ENCODE measurements at regions of chr12 and their contacts with region 1.

Region 1: GRCh38 chr12:109110988-109111495 is 5.3 kb upstream of the ACACB start:
- DNase-seq: peak; percentile 95
- ATAC-seq: peak; percentile 93

Region 2: DNA sequence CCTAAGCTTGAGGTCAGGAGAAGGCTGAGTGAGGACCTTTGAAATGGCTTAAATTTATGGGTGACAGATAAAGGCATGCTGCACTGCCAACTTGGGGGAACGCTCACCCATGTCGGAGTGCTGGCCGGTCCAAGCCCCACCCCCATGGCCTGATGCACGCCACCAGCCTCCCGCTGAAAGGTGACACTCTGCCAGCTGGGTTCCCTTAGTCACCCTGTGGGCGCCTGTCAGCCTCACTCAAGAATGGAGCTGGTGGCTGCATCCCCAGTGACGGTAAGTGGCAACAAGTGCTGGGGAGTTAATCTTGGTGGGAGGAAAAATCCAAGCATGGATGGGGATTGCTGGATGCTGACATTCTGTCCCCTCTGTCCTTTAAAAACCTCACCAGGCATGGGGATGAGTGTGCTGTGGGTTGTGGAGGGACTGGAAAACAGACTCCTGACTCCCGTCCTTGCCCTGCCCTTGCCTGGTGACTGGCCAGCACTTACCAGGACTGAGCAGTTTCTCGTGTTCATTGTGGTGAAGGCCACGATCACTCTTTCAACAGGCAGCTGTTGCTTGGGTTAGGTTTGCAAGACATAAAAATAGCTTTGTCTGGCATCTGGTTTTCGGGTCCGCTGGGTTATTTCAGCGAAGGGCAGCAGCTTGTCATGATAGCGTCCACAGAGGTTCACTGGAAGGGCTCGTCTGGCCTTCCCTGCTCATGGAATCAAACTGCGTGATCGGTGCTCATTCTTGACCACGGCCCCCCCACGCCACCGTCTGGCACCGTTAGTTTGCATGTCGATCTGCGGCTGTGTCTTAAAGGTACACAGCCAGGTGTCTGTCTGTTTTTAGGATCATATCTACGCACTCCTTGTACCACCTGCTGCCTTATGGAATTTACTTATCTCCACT is 20.4 kb after region 1 on chr12:
- intact Hi-C with region 1: loop called (anchors 2 kb)
- DNase-seq: peak; percentile 85
- ATAC-seq: peak; percentile 84

Region 3: GRCh38 chr12:109154451-109155438 is 43.7 kb after region 1 on chr12:
- intact Hi-C with region 1: loop called (anchors 2 kb)
- DNase-seq: peak; percentile 93
- ATAC-seq: peak; percentile 95

Region 4: DNA sequence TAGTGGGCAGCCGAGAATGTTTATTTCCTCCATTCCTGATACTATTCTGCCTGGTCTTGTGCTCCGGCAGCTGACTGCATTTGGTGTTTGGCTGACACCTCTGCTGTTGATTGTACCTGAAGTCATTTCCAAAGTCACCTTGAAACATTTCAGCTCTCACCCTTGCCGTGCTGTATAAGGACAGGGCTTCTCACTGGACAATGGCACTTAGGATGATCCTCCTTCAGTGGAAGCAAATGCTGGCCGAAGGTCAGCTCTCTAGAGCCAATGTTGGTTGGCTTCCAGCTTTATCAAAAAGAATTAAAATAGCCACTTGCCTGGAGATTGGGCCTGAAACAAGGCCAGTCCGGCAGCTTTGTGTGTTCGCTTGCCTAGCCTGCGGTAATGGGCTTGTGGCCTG is 49.4 kb after region 1 on chr12:
- intact Hi-C with region 1: loop called (anchors 2 kb)
- DNase-seq: no peak
- ATAC-seq: peak; percentile 69